ENCODE measurements at regions of chr13 and their contacts with region 1.

Region 1: GRCh38 chr13:100721885-100722512 is 47.4 kb upstream of the TMTC4 start:
- DNase-seq: no peak
- ATAC-seq: peak; percentile 91
- H3K4me3 ChIP-seq: no peak overlapping the region
- H3K27ac ChIP-seq: no peak overlapping the region
- H3K4me1 ChIP-seq: no peaks in the 10 kb centered on the region
- H3K27me3 ChIP-seq: no peaks in the 10 kb centered on the region
- CTCF ChIP-seq: peak; percentile 71 to 83 (median 72)
- EP300 ChIP-seq: no peak
- POLR2A ChIP-seq: no peak
- RAD21 ChIP-seq: peak; percentile 54

Region 2: DNA sequence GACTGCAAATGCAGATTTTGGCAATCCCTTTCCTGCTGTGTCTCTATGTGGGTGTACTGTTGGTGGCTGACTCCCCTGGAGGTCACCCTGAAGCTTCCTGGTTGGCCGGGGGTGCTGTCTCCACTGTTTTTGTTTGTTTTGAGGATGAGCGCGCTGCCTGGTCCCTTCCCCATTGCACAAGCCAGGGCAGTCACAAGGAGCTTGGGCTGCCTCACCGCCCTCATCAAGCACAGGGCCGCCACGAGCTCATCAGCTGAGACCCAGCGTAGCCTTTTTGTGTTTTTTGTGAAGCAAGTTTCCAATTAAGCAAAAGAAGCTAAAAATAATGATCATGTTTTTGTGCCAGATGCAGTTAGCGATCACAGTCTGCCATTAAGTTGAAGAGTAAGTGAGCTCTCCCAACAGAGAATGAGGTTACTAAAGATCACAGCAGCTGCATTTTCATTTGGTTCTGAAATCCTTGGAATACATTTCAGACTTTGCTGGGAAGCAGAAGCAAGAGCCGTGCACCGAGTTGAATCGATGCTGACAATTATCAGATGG is 191.3 kb before region 1 on chr13:
- CTCF ChIA-PET with region 1: no interaction called
- POLR2A ChIA-PET with region 1: no interaction called
- RAD21 ChIA-PET with region 1: no interaction called
- SMC1A ChIA-PET with region 1: no interaction called
- in situ Hi-C with region 1: no loop called
- intact Hi-C with region 1: no loop called
- DNase-seq: no peak
- ATAC-seq: no peak
- H3K4me3 ChIP-seq: no peak overlapping the region
- H3K27ac ChIP-seq: no peak overlapping the region
- H3K4me1 ChIP-seq: no peaks in the 10 kb centered on the region
- H3K27me3 ChIP-seq: no peaks in the 10 kb centered on the region
- CTCF ChIP-seq: no peak
- EP300 ChIP-seq: no peak
- POLR2A ChIP-seq: no peak
- RAD21 ChIP-seq: no peak

Region 3: GRCh38 chr13:100734194-100734720 is 12.3 kb after region 1 on chr13:
- CTCF ChIA-PET with region 1: interaction called, 15 read pairs
- POLR2A ChIA-PET with region 1: no interaction called
- RAD21 ChIA-PET with region 1: no interaction called
- SMC1A ChIA-PET with region 1: no interaction called
- in situ Hi-C with region 1: no loop called
- intact Hi-C with region 1: no loop called
- DNase-seq: no peak
- ATAC-seq: no peak
- H3K4me3 ChIP-seq: no peak overlapping the region
- H3K27ac ChIP-seq: no peak overlapping the region
- H3K4me1 ChIP-seq: no peaks in the 10 kb centered on the region
- H3K27me3 ChIP-seq: no peaks in the 10 kb centered on the region
- CTCF ChIP-seq: no peak
- EP300 ChIP-seq: no peak
- POLR2A ChIP-seq: no peak
- RAD21 ChIP-seq: no peak

Region 4: GRCh38 chr13:100917011-100917410 is 195.0 kb after region 1 on chr13:
- CTCF ChIA-PET with region 1: no interaction called
- POLR2A ChIA-PET with region 1: no interaction called
- RAD21 ChIA-PET with region 1: no interaction called
- SMC1A ChIA-PET with region 1: no interaction called
- in situ Hi-C with region 1: no loop called
- intact Hi-C with region 1: no loop called
- DNase-seq: no peak
- ATAC-seq: peak; percentile 95
- H3K4me3 ChIP-seq: no peak overlapping the region
- H3K27ac ChIP-seq: no peak overlapping the region
- H3K4me1 ChIP-seq: no peaks in the 10 kb centered on the region
- H3K27me3 ChIP-seq: no peaks in the 10 kb centered on the region
- CTCF ChIP-seq: no peak
- EP300 ChIP-seq: peak in 1 of 2 experiments; percentile 13; a peak in 1 of 4 replicates
- POLR2A ChIP-seq: no peak
- RAD21 ChIP-seq: no peak

Region 5: DNA sequence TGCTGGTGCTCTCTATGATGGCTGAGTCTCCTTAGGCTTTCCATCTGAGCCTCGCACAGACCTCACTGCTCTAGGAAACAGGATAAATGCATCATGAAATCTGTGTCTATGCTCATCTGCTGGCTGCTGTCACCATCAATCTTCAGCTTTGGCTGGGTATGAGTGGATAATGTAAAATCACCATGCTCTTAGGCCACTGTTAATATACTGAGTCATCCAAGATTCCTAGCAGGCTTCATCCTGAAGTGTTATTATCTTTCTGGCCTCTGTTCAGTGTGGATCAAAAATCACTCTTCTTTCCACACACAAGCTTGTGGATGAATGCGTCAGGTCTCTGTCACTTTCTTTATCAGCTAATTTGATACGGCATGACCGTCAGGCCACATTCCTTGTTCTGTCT is 376.9 kb after region 1 on chr13:
- CTCF ChIA-PET with region 1: interaction called, 3 read pairs
- POLR2A ChIA-PET with region 1: no interaction called
- RAD21 ChIA-PET with region 1: interaction called, 3 read pairs
- SMC1A ChIA-PET with region 1: interaction called, 3 read pairs
- in situ Hi-C with region 1: no loop called
- intact Hi-C with region 1: loop called (anchors 2 kb)
- DNase-seq: no peak
- ATAC-seq: no peak
- H3K4me3 ChIP-seq: no peak overlapping the region
- H3K27ac ChIP-seq: no peak overlapping the region
- H3K4me1 ChIP-seq: no peaks in the 10 kb centered on the region
- H3K27me3 ChIP-seq: peaks cover 0 to 5% of the 10 kb centered on the region in 2 experiments; a peak in 1 of 4 replicates
- CTCF ChIP-seq: no peak
- EP300 ChIP-seq: no peak
- POLR2A ChIP-seq: no peak
- RAD21 ChIP-seq: no peak

Region 6: DNA sequence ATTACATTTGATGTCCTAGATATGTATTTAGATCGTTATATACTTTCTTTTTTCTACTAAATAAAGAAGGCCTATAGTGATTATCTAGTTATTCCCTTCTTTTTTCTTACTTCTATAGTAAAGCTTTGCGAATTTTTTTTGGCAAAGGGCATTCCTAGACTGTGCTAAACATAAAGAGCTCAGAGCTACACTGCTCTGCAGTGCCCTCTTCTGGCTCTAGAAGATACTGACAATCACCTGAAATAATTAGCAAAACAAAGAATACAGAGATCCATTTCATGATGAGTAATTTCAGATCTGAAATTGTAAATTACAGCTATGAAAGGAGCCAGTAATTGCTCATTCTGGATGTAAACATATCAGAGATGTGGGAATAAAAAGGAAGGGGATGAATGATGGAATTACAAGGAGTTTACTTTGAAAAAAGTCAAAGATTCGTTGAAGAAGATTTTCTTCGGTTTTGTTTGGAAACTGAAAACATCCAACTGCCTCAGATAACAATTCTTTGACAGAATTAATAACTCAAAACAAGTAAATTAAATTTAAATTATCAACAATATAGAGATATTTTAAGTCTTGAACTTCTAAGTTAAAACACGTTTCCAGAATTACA is 405.8 kb after region 1 on chr13:
- CTCF ChIA-PET with region 1: interaction called, 3 read pairs
- POLR2A ChIA-PET with region 1: no interaction called
- RAD21 ChIA-PET with region 1: interaction called, 5 read pairs
- SMC1A ChIA-PET with region 1: no interaction called
- in situ Hi-C with region 1: loop called (anchors 10 kb)
- intact Hi-C with region 1: loop called (anchors 1 kb)
- DNase-seq: no peak
- ATAC-seq: peak; percentile 90
- H3K4me3 ChIP-seq: no peak overlapping the region
- H3K27ac ChIP-seq: no peak overlapping the region
- H3K4me1 ChIP-seq: no peaks in the 10 kb centered on the region
- H3K27me3 ChIP-seq: no peaks in the 10 kb centered on the region
- CTCF ChIP-seq: peak; percentile 61 to 76 (median 68)
- EP300 ChIP-seq: no peak
- POLR2A ChIP-seq: no peak
- RAD21 ChIP-seq: peak; percentile 75

Measured in GM12878 (cell line).